Activated CD8-positive, alpha-beta memory T cell treated with anti-CD3 and anti-CD28 coated beads, Interleukin-2, amount 10 ng/mL, durations not matched to agents 7 days and 5 days (primary cell): ENCODE measurements at regions of chr17 and their contacts with region 1.

Region 1: GRCh38 chr17:35969558-35970380 is 11.5 kb downstream of the CCL16 start:
- DNase-seq: peak; percentile 89
- ATAC-seq: peak; percentile 81
- H3K4me3 Mint-ChIP-seq: no peak overlapping the region
- H3K27ac Mint-ChIP-seq: peak overlapping the region; percentile 44
- H3K4me1 Mint-ChIP-seq: peaks cover 27% of the 10 kb centered on the region
- H3K27me3 Mint-ChIP-seq: no peaks in the 10 kb centered on the region

Region 2: DNA sequence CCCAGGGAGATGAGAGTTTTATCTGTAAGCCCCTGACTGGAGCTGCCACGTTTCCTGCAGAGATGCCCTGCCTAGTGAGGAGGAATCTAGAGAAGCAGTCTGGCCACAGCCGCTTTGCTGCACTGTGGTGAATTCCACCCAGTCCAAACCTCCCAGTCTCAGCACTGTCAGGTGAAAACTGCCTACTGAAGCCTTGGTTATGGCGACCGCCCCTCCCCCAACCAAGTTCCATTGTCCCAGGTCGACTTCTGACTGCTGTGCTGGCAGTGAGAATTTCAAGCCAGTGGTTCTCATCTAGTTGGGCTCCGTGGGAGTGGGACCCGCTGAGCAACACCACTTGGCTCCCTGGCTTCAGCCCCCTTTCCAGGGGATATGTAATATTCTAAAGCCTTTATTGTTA is 16.0 kb before region 1 on chr17:
- CTCF ChIA-PET with region 1: interaction called, 22 read pairs
- DNase-seq: no peak
- ATAC-seq: no peak
- H3K4me3 Mint-ChIP-seq: no peak overlapping the region
- H3K27ac Mint-ChIP-seq: no peak overlapping the region
- H3K4me1 Mint-ChIP-seq: peaks cover 4% of the 10 kb centered on the region
- H3K27me3 Mint-ChIP-seq: peaks cover 9% of the 10 kb centered on the region

Region 3: DNA sequence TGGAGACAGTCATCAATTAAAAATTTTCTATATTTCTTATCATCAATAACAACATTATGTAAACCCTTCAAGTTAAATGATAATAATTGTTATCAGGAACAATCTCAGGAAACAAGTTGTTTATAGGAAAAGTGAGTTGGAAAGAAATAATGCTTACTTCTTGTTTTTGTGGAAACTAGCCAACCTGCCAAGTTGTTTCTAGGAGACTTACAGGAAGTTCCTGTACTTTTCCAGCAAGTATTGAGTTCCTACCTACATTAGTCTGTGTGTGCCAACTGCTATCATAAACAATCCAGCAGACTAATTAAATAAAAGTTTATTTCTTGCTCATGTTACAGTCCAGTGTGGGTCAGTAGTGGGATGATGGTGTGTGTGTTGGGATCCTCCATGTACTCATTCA is 18.4 kb after region 1 on chr17:
- CTCF ChIA-PET with region 1: interaction called, 15 read pairs
- DNase-seq: no peak
- ATAC-seq: no peak
- H3K4me3 Mint-ChIP-seq: no peak overlapping the region
- H3K27ac Mint-ChIP-seq: no peak overlapping the region
- H3K4me1 Mint-ChIP-seq: peaks cover 2% of the 10 kb centered on the region
- H3K27me3 Mint-ChIP-seq: peaks cover 4% of the 10 kb centered on the region

Region 4: DNA sequence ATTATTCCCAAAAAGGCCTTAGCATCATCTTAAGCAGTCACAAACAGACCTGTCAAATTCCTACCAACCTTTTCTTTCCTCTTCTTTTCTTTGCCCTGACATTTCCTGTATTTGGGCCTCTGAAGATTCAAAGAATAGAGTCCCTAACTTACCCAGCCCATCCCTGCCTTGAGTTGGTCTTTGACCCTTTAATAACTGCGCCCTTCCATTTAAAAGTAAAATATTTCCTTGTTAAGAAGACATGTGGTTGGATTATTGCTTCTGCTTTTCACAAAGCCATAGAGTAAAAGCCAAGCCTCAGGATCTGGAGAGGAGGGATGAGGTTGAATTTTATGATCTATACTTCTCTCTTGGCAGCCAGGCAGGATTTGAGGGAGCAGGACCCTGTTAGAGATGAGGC is 61.2 kb after region 1 on chr17:
- CTCF ChIA-PET with region 1: no interaction called
- DNase-seq: no peak
- ATAC-seq: no peak
- H3K4me3 Mint-ChIP-seq: no peak overlapping the region
- H3K27ac Mint-ChIP-seq: peak overlapping the region; percentile 30
- H3K4me1 Mint-ChIP-seq: no peaks in the 10 kb centered on the region
- H3K27me3 Mint-ChIP-seq: peaks cover 18% of the 10 kb centered on the region

Region 5: GRCh38 chr17:36072431-36073121 is 102.8 kb after region 1 on chr17:
- CTCF ChIA-PET with region 1: interaction called, 103 read pairs
- DNase-seq: peak; percentile 88
- ATAC-seq: peak; percentile 79
- H3K4me3 Mint-ChIP-seq: peak overlapping the region; percentile 3
- H3K27ac Mint-ChIP-seq: peak overlapping the region; percentile 63
- H3K4me1 Mint-ChIP-seq: peaks cover 72% of the 10 kb centered on the region
- H3K27me3 Mint-ChIP-seq: peaks cover 7% of the 10 kb centered on the region